ENCODE measurements at regions of chr1 and their contacts with region 1.

Region 1: GRCh38 chr1:117284399-117285215 is 73.9 kb upstream of the VTCN1 start:
- DNase-seq: peak; percentile 79
- ATAC-seq: peak; percentile 96
- H3K4me3 ChIP-seq: no peak overlapping the region
- H3K27ac ChIP-seq: no peak overlapping the region
- H3K4me1 ChIP-seq: no peaks in the 10 kb centered on the region
- H3K27me3 ChIP-seq: peaks cover 4% of the 10 kb centered on the region
- CTCF ChIP-seq: peak; percentile 86
- POLR2A ChIP-seq: no peak
- RAD21 ChIP-seq: peak; percentile 93

Region 2: DNA sequence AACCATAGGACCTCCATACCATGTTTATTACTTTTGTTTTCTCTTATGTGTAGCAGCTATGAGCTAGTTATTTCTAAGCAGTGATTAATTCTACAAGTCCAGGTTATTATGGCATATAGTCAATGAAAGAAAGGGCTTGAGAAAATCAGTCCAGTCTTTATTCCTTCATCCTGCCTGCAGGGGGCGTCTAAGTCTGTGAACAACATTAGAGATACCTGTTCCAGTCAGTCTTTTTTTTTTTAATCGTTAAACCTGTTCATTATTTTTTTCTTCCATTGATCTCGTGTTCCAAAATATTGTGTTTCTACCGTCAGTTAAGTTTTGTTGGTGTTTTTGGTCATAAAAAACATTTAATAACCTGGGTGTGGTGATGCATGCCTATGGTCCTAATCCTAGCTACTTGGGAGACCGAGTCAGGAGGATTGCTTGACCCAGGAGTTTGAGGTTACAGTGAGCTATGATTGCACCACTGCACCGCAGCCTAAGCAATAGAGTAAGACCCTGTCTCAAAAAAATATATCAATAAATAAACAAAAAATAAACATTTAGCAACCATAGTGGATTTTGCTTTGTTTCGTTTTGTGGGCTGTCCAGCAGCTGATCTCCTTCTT is 559.7 kb before region 1 on chr1:
- CTCF ChIA-PET with region 1: no interaction called
- POLR2A ChIA-PET with region 1: no interaction called
- dilution Hi-C with region 1: no loop called
- in situ Hi-C with region 1: loop called (anchors 25 kb)
- intact Hi-C with region 1: loop called (anchors 5 kb)
- DNase-seq: peak; percentile 52
- ATAC-seq: peak; percentile 64
- H3K4me3 ChIP-seq: no peak overlapping the region
- H3K27ac ChIP-seq: no peak overlapping the region
- H3K4me1 ChIP-seq: no peaks in the 10 kb centered on the region
- H3K27me3 ChIP-seq: peaks cover 1% of the 10 kb centered on the region; the same call in 1 of the 2 replicates
- CTCF ChIP-seq: peak; percentile 67
- POLR2A ChIP-seq: no peak
- RAD21 ChIP-seq: peak; percentile 51

Region 3: DNA sequence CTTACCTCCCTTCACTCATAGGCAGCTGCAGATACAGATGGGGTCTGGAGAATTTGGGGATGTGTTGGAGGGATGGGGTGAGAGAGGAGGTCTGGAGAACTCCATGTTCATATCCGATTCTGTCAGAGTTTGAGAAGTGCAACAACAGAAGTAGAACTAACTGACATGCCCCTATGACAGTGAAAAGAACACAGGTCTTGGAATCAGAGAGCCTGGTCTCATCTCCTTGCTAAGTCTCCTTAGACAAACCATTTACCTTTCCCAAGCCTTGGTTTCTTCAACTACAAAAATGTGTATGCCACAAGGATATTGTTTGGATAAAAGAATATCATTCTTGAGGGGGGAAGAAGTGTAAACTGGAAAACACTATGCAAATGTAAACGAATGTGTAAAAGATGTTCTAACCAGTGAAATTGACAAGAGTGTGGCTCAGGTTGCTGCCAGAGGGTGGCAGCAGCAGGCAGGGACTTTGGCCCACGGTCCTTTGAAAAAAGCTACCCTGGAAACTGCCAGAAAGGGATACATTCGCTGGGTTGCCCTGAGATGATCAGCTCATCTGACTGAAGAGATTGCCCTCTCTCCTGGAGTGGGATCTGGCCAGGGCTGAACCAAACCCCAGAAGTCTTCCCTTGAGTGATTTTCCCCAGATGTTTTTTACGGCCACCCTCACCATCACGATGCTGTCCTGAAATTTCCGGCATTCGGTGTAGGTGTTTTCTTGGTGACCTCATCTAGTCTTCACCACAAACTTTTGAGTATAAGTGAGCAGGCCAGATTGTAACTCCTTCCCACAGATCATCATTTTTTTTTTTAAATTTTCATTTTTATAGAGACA is 547.4 kb before region 1 on chr1:
- CTCF ChIA-PET with region 1: no interaction called
- POLR2A ChIA-PET with region 1: no interaction called
- dilution Hi-C with region 1: no loop called
- in situ Hi-C with region 1: loop called (anchors 25 kb)
- intact Hi-C with region 1: loop called (anchors 5 kb)
- DNase-seq: peak; percentile 35
- ATAC-seq: peak; percentile 80
- H3K4me3 ChIP-seq: no peak overlapping the region
- H3K27ac ChIP-seq: no peak overlapping the region
- H3K4me1 ChIP-seq: no peaks in the 10 kb centered on the region
- H3K27me3 ChIP-seq: no peaks in the 10 kb centered on the region
- CTCF ChIP-seq: peak; percentile 75
- POLR2A ChIP-seq: no peak
- RAD21 ChIP-seq: peak; percentile 71

Region 4: GRCh38 chr1:117077267-117077666 is 207.3 kb before region 1 on chr1:
- CTCF ChIA-PET with region 1: interaction called, 7 read pairs
- POLR2A ChIA-PET with region 1: no interaction called
- dilution Hi-C with region 1: no loop called
- in situ Hi-C with region 1: loop called (anchors 5 kb)
- intact Hi-C with region 1: no loop called
- DNase-seq: peak; percentile 96
- ATAC-seq: peak; percentile 92
- H3K4me3 ChIP-seq: no peak overlapping the region
- H3K27ac ChIP-seq: no peak overlapping the region
- H3K4me1 ChIP-seq: peaks cover 3% of the 10 kb centered on the region
- H3K27me3 ChIP-seq: no peaks in the 10 kb centered on the region
- CTCF ChIP-seq: no peak
- POLR2A ChIP-seq: no peak
- RAD21 ChIP-seq: no peak

Region 5: DNA sequence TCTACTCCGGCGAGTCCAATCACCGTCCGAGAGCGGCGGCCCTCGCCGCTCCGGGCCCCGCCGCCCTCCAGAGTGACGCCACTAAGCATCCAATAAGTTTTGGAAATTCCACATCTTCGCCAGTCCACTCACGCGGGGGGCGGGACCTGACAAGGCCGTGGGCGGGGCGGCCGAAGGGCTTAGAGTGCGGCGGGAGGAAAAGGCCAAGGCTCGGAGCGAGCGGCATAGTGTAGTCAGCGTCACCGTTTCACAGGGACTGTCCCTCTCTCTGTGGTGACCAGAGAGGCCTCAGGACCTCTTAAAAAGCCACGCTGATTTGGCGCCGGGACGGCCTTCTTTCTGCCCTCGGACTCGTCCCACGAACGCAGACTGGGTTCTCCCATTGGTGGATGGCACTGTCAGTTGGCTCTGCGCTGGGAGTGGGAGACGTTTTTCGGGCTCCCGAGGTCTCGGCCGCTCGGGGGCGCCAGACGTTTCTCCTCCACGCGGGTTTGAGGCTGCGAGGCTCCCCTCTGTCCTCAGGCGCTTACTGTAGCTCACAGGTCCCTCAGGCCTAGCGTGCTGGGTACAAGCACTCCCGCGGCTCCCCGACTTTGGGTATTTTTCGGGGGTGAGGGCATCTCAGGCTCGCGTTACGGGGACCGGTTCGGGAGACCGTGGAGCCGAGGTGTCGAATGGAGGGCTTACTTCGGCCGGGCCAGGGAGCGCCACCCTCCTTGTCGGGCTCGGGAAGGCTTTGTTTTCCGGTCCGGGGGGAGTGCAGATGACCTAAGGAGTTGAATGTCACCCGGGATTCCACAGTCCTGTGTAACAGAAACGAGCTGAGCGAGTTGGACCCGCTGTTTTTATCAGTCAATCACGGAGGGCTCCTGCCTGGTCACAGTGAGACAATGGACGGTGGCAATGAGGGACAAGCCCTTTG is 162.6 kb before region 1 on chr1:
- CTCF ChIA-PET with region 1: interaction called, 7 read pairs
- POLR2A ChIA-PET with region 1: no interaction called
- dilution Hi-C with region 1: no loop called
- in situ Hi-C with region 1: no loop called
- intact Hi-C with region 1: loop called (anchors 1 kb)
- DNase-seq: peak; percentile 96
- ATAC-seq: peak; percentile 98
- H3K4me3 ChIP-seq: peak overlapping the region; percentile 68
- H3K27ac ChIP-seq: peak overlapping the region; percentile 95
- H3K4me1 ChIP-seq: peaks cover 8% of the 10 kb centered on the region; the same call in 1 of the 2 replicates
- H3K27me3 ChIP-seq: peaks cover 3% of the 10 kb centered on the region
- CTCF ChIP-seq: peak; percentile 88
- POLR2A ChIP-seq: peak; percentile 70
- RAD21 ChIP-seq: peak; percentile 61

Region 6: GRCh38 chr1:117128323-117129079 is 156.1 kb before region 1 on chr1:
- CTCF ChIA-PET with region 1: interaction called, 13 read pairs
- POLR2A ChIA-PET with region 1: no interaction called
- dilution Hi-C with region 1: no loop called
- in situ Hi-C with region 1: no loop called
- intact Hi-C with region 1: loop called (anchors 1 kb)
- DNase-seq: peak; percentile 69
- ATAC-seq: peak; percentile 84
- H3K4me3 ChIP-seq: no peak overlapping the region
- H3K27ac ChIP-seq: no peak overlapping the region
- H3K4me1 ChIP-seq: 0 out of 2 replicates have a peak, but pooled peaks cover 2% of the 10 kb centered on the region
- H3K27me3 ChIP-seq: peaks cover 3% of the 10 kb centered on the region
- CTCF ChIP-seq: peak; percentile 67
- POLR2A ChIP-seq: no peak
- RAD21 ChIP-seq: peak; percentile 67

Measured in IMR-90 (cell line).